ENCODE measurements at regions of chr2 and their contacts with region 1.

Region 1: GRCh38 chr2:158953926-158954763 is 14.3 kb upstream of the TANC1 start:
- DNase-seq: peak; percentile 95
- H3K4me3 ChIP-seq: no peak overlapping the region
- H3K27ac ChIP-seq: peak overlapping the region; percentile 54 to 81 (median 72)
- H3K4me1 ChIP-seq: peaks cover 0 to 38% (median 28%) of the 10 kb centered on the region in 4 donors
- H3K27me3 ChIP-seq: no peaks in the 10 kb centered on the region
- CTCF ChIP-seq: no peak
- EP300 ChIP-seq: peak; percentile 20 to 63 (median 30)
- POLR2A ChIP-seq: no peak

Region 2: DNA sequence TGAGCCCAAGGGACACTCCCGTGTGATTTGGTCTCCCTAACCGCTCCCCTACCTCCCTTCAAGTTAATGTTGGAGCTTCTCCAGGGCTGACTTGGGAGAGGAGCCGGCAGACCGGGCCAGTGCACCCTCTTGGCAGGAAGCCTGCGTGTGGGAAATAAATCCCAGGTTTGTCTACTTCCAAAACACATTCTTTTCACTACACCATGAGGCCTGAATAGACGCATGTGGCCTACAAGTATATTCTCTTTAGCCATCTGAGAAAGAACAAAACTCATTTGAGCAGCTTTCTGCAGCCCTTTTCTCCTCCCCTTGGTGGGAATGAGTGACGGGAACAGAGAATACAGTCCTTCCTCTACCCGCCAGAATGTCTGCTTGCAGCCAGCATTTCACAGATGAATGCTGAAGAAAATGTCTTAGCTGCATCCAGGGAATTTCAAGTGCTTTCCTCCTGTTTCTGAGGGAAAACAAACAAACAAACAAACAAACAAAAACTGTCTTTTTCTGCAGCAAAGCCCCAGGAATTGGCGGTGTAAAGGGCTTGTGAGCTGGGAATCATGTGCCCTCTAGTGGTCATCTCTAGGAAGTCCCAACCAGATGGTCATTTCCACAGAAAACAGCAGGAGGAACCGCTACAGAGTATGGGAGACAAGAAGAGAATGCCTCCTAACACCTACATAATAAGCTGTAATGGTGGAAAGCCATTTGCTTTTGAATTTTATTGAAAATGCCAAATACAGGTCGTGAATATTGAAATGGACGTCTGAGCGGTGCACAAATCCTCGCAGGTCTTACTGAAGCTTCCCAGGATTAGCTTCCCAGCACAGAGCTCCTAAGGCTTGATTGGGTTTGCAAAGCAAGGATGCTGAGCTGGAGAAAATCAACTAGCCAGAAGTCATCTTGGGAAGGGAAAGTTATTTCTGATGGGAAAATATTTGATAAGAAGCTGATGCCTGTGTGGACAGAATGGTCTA is 200.2 kb before region 1 on chr2:
- intact Hi-C with region 1: no loop called
- DNase-seq: no peak
- H3K4me3 ChIP-seq: peak overlapping the region in 2 of 4 donors; percentile 26 to 31
- H3K27ac ChIP-seq: no peak overlapping the region
- H3K4me1 ChIP-seq: peaks cover 0 to 10% (median 6%) of the 10 kb centered on the region in 4 donors
- H3K27me3 ChIP-seq: no peaks in the 10 kb centered on the region
- CTCF ChIP-seq: peak; percentile 56 to 90 (median 82)
- EP300 ChIP-seq: no peak
- POLR2A ChIP-seq: no peak

Region 3: GRCh38 chr2:158936978-158937377 is 17.2 kb before region 1 on chr2:
- intact Hi-C with region 1: loop called (anchors 2 kb)
- DNase-seq: peak; percentile 76
- H3K4me3 ChIP-seq: no peak overlapping the region
- H3K27ac ChIP-seq: peak overlapping the region in 3 of 4 donors; percentile 21 to 64 (median 61)
- H3K4me1 ChIP-seq: peaks cover 0 to 13% (median 2%) of the 10 kb centered on the region in 4 donors
- H3K27me3 ChIP-seq: no peaks in the 10 kb centered on the region
- CTCF ChIP-seq: no peak
- EP300 ChIP-seq: peak; percentile 46 to 94 (median 74)
- POLR2A ChIP-seq: no peak

Region 4: DNA sequence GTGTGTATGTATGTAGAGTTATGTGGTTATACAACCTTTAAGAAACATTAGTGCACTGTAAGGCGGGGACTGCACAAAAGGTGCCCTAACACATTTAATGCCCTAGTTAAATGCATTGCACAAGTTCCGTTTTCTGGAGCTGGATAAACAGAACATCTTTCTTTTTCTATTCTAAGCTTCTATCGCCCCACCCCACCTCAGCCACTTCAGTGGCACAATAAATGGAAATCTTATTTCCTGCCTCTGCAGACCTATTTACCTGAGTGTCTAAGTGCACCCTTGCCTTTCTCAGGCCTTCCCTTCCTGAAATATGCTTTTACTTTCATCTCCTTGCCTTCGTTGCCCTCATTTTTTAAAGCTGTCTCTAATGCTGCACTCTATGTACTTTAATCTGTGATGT is 137.8 kb after region 1 on chr2:
- intact Hi-C with region 1: loop called (anchors 1 kb)
- DNase-seq: no peak
- H3K4me3 ChIP-seq: no peak overlapping the region
- H3K27ac ChIP-seq: peak overlapping the region; percentile 68 to 86 (median 78)
- H3K4me1 ChIP-seq: peaks cover 0 to 70% (median 69%) of the 10 kb centered on the region in 4 donors
- H3K27me3 ChIP-seq: no peaks in the 10 kb centered on the region
- CTCF ChIP-seq: no peak
- EP300 ChIP-seq: no peak
- POLR2A ChIP-seq: no peak

Region 5: DNA sequence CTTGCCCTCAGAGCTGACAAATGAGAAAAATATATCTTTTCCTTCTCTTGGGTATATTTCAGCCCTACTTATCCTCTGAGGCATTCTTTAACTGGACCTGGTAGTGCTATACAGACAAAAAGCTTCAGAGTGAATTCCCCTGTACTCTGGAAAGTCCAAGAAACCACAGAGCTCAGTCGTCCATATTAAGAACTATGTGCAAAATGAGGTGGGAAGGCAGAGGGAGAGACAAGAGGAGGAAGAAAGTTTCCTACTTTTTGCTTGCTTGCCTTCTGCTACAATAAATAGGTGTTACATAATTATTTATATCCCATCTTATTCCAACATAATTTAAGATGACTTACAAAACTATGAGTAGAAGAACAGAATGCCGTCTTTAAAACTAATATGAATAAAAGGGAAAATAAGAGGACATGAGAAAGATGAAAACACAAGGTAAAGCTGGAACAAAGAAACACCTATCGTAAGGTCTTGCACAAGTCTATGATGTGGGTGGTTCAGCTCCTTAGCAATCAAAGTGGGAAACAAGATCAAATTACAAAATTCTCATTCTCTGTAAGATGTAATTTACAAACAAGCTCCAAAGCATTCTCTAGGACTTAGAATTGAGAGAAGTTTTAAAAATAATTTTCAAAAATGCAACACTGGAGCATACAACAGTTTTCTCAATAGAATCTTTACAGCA is 564.3 kb after region 1 on chr2:
- intact Hi-C with region 1: no loop called
- DNase-seq: no peak
- H3K4me3 ChIP-seq: no peak overlapping the region
- H3K27ac ChIP-seq: no peak overlapping the region
- H3K4me1 ChIP-seq: peaks cover 0 to 47% (median 26%) of the 10 kb centered on the region in 4 donors
- H3K27me3 ChIP-seq: no peaks in the 10 kb centered on the region
- CTCF ChIP-seq: no peak
- EP300 ChIP-seq: no peak
- POLR2A ChIP-seq: no peak